ENCODE measurements at regions of chr6 and their contacts with region 1.

Region 1: DNA sequence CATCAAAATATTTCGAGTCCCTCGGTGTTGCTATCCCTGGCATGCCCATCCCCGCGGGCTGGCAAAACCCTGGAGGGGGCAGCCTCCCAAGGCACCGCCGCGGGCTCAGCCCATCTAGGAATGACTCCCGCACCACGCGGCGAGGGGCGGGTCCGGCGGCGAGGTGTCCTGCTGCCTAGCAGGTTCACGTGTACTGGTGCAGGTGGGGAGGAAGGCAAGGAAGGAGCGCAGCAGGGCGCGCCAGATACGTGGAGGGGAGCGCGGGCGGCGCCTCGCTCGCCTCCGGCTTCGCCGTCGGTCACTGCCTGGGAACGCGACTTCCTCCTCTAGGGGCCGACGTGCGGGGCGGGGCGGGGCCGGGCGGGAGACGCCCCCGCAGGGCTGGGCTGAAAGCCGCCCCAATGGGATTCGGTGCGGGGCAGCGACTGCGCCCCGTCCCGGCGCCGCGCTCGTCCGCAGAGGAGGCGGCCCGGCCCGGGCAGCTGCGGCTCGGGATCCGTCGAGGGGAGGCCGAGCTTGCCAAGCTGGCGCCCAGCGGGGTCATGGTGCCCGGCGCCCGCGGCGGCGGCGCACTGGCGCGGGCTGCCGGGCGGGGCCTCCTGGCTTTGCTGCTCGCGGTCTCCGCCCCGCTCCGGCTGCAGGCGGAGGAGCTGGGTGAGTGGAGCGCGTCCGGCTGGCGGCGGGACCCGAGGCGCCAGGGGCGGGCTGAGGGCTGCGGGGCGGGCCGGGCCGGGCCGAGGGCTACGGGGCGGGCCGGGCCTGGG is at the start of gene DCBLD1:
- DNase-seq: peak; percentile 86
- H3K4me3 ChIP-seq: peak within 1 kb of the TSS; percentile 81 to 91 (median 83)
- H3K27ac ChIP-seq: peak within 1 kb of the TSS; percentile 79
- H3K4me1 ChIP-seq: peaks cover 27% of the 10 kb centered on the region
- H3K27me3 ChIP-seq: no peaks in the 10 kb centered on the region
- CTCF ChIP-seq: no peak
- total RNA-seq, gene DCBLD1: 34.6 to 84.0 TPM

Region 2: DNA sequence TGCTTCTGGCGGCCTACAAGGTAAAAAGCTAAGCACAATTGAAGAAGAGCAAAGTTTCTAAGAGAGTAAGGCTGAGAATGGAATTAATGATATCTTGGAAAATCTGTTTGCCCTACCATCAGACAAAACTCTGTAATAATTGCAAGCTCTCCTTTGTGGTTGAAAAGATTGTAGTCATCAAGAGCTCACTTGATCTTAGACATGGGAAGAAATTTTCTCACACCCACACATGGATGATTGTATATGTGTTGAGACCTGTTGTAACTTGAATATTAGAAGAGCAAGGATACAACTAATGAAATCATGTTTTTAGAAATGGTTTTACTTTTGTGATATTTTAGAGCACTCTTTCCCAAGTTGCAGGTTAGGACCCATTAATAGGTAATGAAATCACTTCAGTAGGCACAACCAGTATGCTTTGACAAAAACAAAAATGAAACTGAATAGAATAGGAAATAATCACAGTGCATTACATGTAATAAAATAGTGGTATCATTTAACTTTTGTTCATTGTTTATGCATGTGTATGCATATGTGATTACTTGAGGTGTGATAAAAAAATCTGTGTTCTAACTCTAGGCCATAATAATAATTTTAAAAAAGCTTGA is 14.1 kb after region 1 on chr6:
- CTCF ChIA-PET with region 1: interaction called, 3 read pairs
- dilution Hi-C with region 1: no loop called
- in situ Hi-C with region 1: no loop called
- intact Hi-C with region 1: loop called (anchors 1 kb)
- DNase-seq: peak; percentile 96
- H3K4me3 ChIP-seq: peak overlapping the region in 2 of 3 experiments; percentile 9 to 28
- H3K27ac ChIP-seq: peak overlapping the region; percentile 95
- H3K4me1 ChIP-seq: peaks cover 57% of the 10 kb centered on the region
- H3K27me3 ChIP-seq: no peaks in the 10 kb centered on the region
- CTCF ChIP-seq: no peak

Region 3: GRCh38 chr6:117547688-117548621 is 65.5 kb after region 1 on chr6:
- CTCF ChIA-PET with region 1: no interaction called
- dilution Hi-C with region 1: no loop called
- in situ Hi-C with region 1: no loop called
- intact Hi-C with region 1: loop called (anchors 2 kb)
- DNase-seq: no peak
- H3K4me3 ChIP-seq: peak overlapping the region in 1 of 3 experiments; percentile 17
- H3K27ac ChIP-seq: peak overlapping the region; percentile 6
- H3K4me1 ChIP-seq: peaks cover 48% of the 10 kb centered on the region
- H3K27me3 ChIP-seq: no peaks in the 10 kb centered on the region
- CTCF ChIP-seq: no peak

Region 4: GRCh38 chr6:119484637-119484997 is 2002.2 kb after region 1 on chr6:
- CTCF ChIA-PET with region 1: no interaction called
- dilution Hi-C with region 1: no loop called
- in situ Hi-C with region 1: no loop called
- intact Hi-C with region 1: no loop called
- DNase-seq: peak; percentile 86
- H3K4me3 ChIP-seq: no peak overlapping the region
- H3K27ac ChIP-seq: no peak overlapping the region
- H3K4me1 ChIP-seq: peaks cover 6% of the 10 kb centered on the region
- H3K27me3 ChIP-seq: no peaks in the 10 kb centered on the region
- CTCF ChIP-seq: no peak